Naive thymus-derived CD4-positive, alpha-beta T cell (primary cell): ENCODE measurements at regions of chr12 and their contacts with region 1.

Region 1: DNA sequence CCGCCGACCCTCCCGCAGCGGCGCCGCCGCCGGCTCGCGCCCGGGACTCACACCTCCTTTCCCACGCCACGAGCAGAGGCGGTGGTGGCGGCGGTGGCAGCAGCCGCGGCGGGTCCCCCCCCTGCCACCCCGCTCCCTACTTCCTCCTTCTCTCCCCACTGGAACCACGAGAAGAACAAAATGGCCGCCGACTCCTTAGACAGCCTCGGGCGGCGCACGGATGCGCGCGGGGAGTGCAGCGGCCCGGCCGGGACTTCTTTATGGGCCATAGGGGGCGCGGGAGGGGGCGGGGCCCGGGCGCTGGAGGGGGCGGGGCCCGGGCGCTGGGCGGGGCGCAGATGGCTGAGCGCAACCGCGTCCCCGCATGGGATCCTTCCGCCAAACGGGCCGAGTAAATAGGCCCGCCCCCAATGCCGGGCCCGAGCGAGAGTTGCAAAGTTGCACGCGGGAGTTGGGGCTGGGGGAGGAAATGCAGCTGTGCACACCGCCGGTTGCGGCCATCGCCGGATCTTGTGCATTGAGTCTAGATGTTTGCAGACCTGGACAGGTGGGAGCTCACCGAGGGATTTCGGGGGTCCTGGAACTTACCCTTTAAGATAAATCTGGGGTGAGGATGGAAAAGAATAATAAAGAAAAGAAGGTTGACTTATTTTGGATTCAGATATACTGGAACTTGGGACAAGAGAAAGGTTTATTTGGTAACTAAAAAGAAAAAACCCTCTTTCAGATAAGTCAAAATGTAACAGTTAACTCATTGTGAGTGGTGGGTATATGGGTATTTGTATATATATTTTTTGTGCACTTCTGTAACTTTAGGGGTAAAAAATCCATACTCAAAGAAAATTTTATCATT is at the start of gene PPP1CC:
- DNase-seq: peak; percentile 81 to 93 (median 91)
- ATAC-seq: peak; percentile 98
- H3K4me3 ChIP-seq: peak within 1 kb of the TSS; percentile 68
- H3K4me3 Mint-ChIP-seq: peak within 1 kb of the TSS; percentile 89 to 100 (median 99)
- H3K27ac ChIP-seq: peak within 1 kb of the TSS; percentile 79
- H3K27ac Mint-ChIP-seq: peak within 1 kb of the TSS; percentile 94 to 99 (median 97)
- H3K4me1 ChIP-seq: peaks cover 18 to 21% of the 10 kb centered on the region in 2 donors
- H3K4me1 Mint-ChIP-seq: peaks cover 34 to 52% (median 46%) of the 10 kb centered on the region in 7 donors
- H3K27me3 ChIP-seq: no peaks in the 10 kb centered on the region
- H3K27me3 Mint-ChIP-seq: no peaks in the 10 kb centered on the region
- total RNA-seq, gene PPP1CC: 108 to 218 (median 145) TPM

Region 2: GRCh38 chr12:109995686-109996482 is 747.1 kb before region 1 on chr12 and contains the start of gene GIT2:
- CTCF ChIA-PET with region 1: no interaction called
- POLR2A ChIA-PET with region 1: no interaction called
- intact Hi-C with region 1: loop called in 1 of 2 experiments (anchors 5 kb)
- DNase-seq: peak; percentile 88 to 95 (median 93)
- ATAC-seq: peak; percentile 81
- H3K4me3 ChIP-seq: peak within 1 kb of the TSS; percentile 86
- H3K4me3 Mint-ChIP-seq: peak within 1 kb of the TSS; percentile 90 to 100 (median 96)
- H3K27ac ChIP-seq: peak within 1 kb of the TSS; percentile 84
- H3K27ac Mint-ChIP-seq: peak within 1 kb of the TSS; percentile 84 to 100 (median 96)
- H3K4me1 ChIP-seq: peaks cover 22 to 33% of the 10 kb centered on the region in 2 donors
- H3K4me1 Mint-ChIP-seq: peaks cover 42 to 77% (median 66%) of the 10 kb centered on the region in 7 donors
- H3K27me3 ChIP-seq: no peaks in the 10 kb centered on the region
- H3K27me3 Mint-ChIP-seq: no peaks in the 10 kb centered on the region
- total RNA-seq, gene GIT2: 70.3 to 128 (median 109) TPM

Region 3: DNA sequence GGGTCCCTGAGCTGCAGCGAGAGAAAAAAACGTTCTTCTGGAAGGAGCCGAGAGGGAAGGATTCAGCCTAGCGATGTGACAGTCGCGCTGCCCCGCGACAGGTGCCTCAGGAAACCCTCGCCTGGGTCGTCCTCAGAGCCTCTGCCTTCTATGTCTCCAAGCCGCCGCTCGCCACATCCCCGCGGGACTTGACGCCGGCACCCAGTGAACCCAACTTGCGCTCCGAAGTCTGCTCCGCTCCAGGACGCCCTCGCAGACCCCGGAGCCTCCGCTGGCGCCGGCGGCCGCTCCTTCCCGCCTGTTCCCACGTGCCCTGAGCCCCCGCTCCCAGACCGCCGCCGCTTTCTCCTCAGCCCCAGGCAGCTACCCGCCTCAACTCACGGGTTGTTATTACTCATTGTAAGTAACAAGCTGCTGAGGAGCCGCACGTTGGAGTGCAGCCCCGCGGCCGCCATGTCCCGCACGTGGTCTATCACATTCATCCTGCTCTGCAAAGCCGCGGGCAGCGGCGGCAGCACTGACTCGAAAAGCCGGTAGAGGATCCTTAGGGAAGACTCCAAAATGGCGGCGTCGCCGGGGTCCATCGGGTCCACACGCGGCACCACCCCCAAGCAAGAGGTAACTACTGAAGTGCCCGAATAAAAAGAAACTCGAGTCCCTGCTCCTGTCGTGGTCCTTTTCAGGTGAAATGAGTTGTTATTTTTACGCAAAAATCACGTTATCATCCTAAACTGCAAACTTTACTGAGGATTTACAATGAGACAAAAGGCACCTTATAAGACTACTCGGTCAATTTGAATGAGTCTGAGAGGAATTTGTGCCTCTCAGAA is 339.6 kb before region 1 on chr12 and contains the start of gene ANAPC7:
- CTCF ChIA-PET with region 1: no interaction called
- POLR2A ChIA-PET with region 1: no interaction called
- intact Hi-C with region 1: loop called in 1 of 2 experiments (anchors 1 kb)
- DNase-seq: peak; percentile 74 to 90 (median 87)
- ATAC-seq: peak; percentile 98
- H3K4me3 ChIP-seq: peak within 1 kb of the TSS; percentile 99
- H3K4me3 Mint-ChIP-seq: peak within 1 kb of the TSS in 9 of 10 donors; percentile 96 to 100 (median 98)
- H3K27ac ChIP-seq: peak within 1 kb of the TSS; percentile 81
- H3K27ac Mint-ChIP-seq: peak within 1 kb of the TSS; percentile 97 to 100 (median 99)
- H3K4me1 ChIP-seq: peaks cover 6 to 15% of the 10 kb centered on the region in 2 donors
- H3K4me1 Mint-ChIP-seq: peaks cover 15 to 50% (median 29%) of the 10 kb centered on the region in 7 donors
- H3K27me3 ChIP-seq: no peaks in the 10 kb centered on the region
- H3K27me3 Mint-ChIP-seq: no peaks in the 10 kb centered on the region
- total RNA-seq, gene ANAPC7: 40.9 to 71.7 (median 59.7) TPM

Region 4: DNA sequence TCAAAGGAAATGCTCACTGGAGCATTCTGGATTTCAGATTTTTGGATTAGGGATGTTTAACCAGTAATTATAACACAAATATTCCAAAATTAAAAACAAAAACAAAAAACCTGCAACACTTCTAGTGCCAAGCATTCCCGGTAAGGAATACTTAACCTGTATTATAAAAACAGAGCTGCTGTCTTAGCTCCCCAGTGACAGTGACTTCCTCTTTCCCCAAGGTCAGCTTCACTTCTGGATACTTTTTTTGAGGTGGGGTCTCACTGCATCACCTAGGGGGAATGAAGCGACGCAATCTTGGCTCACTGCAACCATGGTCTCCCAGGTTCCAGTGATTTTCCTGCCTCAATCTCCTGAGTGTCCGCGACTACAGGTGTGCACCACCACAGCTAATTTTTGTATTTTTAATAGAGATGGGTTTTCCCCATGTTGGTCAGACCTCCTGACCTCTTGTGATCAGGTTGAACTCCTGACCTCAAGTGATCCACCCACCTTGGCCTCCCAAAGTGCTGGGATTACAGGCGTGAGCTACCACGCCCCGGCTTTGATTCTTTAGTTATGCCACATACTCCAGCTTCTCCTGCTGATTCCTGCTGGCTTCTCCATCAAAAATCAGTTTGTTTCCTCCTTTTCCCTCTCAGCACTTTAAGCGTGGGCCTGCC is 16.1 kb before region 1 on chr12:
- CTCF ChIA-PET with region 1: interaction called, 3 read pairs
- POLR2A ChIA-PET with region 1: interaction called, 6 read pairs
- intact Hi-C with region 1: loop called in 1 of 2 experiments (anchors 2 kb)
- DNase-seq: no peak
- ATAC-seq: no peak
- H3K4me3 ChIP-seq: no peak overlapping the region
- H3K4me3 Mint-ChIP-seq: peak overlapping the region in 1 of 10 donors; percentile 3
- H3K27ac ChIP-seq: no peak overlapping the region
- H3K27ac Mint-ChIP-seq: peak overlapping the region; percentile 12 to 84 (median 36)
- H3K4me1 ChIP-seq: peaks cover 0 to 7% of the 10 kb centered on the region in 2 donors
- H3K4me1 Mint-ChIP-seq: peaks cover 15 to 51% (median 46%) of the 10 kb centered on the region in 7 donors
- H3K27me3 ChIP-seq: no peaks in the 10 kb centered on the region
- H3K27me3 Mint-ChIP-seq: no peaks in the 10 kb centered on the region

Region 5: DNA sequence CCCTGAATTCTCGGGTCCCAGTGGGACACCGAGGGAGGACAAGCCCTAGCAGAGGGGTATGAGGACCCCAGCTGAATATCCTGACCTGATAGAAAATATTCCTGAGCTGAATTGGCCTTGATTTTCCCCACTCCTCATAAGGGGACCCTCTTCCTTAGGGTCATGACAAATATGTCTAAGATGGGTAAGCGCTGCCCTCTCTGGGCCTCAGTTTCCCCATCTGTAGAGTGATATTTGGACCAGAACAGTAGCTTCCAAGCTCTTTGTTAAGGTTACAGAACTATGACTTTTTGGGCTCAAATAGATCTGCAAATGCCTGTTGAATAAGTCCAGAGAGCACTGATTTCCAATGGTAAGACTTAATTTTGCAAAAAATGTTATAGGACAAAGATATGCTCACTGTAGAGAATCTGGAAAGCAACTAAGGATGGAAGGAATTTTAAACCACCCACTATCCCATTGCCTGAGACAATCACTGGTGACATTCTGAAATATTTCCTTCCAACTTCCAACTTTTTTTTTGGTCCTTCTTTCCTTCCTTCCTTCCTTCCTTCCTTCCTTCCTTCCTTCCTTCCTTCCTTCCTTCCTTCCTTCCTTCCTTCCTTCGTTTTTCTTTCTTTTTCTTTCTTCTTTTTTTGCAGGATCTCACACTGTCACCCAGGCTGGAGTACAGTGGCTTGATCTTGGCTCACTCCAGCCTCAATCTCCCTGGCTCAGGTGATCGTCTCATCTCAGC is 145.5 kb after region 1 on chr12:
- CTCF ChIA-PET with region 1: no interaction called
- POLR2A ChIA-PET with region 1: interaction called, 3 read pairs
- intact Hi-C with region 1: loop called in 1 of 2 experiments (anchors 2 kb)
- DNase-seq: no peak
- ATAC-seq: no peak
- H3K4me3 ChIP-seq: no peak overlapping the region
- H3K4me3 Mint-ChIP-seq: peak overlapping the region; percentile 51 to 97 (median 92)
- H3K27ac ChIP-seq: no peak overlapping the region
- H3K27ac Mint-ChIP-seq: peak overlapping the region in 5 of 9 donors; percentile 69 to 91 (median 77)
- H3K4me1 ChIP-seq: peaks cover 0 to 4% of the 10 kb centered on the region in 2 donors
- H3K4me1 Mint-ChIP-seq: peaks cover 0 to 8% (median 4%) of the 10 kb centered on the region in 7 donors
- H3K27me3 ChIP-seq: no peaks in the 10 kb centered on the region
- H3K27me3 Mint-ChIP-seq: peaks cover 0 to 12% (median 0%) of the 10 kb centered on the region in 5 donors